Mammary epithelial cell (primary cell): ENCODE measurements at regions of chr17 and their contacts with region 1.

Region 1: GRCh38 chr17:57783106-57783742 is 38.1 kb upstream of the CCDC182 start:
- DNase-seq: peak; percentile 13
- H3K4me3 ChIP-seq: peak overlapping the region in 1 of 3 experiments; percentile 17
- H3K27ac ChIP-seq: no peak overlapping the region
- H3K4me1 ChIP-seq: peaks cover 4% of the 10 kb centered on the region
- H3K27me3 ChIP-seq: no peaks in the 10 kb centered on the region
- CTCF ChIP-seq: peak; percentile 71 to 81

Region 2: DNA sequence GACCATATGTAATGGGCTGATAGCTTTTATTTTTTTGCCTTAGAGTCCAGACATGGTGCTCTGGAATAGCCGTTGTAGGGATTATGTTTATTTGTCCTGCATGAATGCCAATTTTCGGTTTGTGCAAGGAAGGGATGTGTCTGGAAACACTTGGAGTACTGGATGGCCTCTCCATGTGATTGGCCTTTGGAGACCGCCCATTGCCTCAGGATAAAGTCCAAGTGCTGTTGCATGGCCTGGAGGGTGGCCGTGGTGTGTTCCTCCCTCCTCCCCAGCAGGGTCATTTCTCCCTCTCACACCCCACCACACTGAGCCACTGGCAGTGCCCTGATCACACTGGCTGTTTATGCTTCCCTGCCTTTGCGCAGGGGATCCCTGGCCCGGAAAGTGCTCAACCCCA is 432.9 kb before region 1 on chr17:
- CTCF ChIA-PET with region 1: interaction called, 22 read pairs
- dilution Hi-C with region 1: no loop called
- in situ Hi-C with region 1: no loop called
- intact Hi-C with region 1: no loop called
- DNase-seq: no peak
- H3K4me3 ChIP-seq: no peak overlapping the region
- H3K27ac ChIP-seq: no peak overlapping the region
- H3K4me1 ChIP-seq: no peaks in the 10 kb centered on the region
- H3K27me3 ChIP-seq: no peaks in the 10 kb centered on the region
- CTCF ChIP-seq: no peak

Region 3: DNA sequence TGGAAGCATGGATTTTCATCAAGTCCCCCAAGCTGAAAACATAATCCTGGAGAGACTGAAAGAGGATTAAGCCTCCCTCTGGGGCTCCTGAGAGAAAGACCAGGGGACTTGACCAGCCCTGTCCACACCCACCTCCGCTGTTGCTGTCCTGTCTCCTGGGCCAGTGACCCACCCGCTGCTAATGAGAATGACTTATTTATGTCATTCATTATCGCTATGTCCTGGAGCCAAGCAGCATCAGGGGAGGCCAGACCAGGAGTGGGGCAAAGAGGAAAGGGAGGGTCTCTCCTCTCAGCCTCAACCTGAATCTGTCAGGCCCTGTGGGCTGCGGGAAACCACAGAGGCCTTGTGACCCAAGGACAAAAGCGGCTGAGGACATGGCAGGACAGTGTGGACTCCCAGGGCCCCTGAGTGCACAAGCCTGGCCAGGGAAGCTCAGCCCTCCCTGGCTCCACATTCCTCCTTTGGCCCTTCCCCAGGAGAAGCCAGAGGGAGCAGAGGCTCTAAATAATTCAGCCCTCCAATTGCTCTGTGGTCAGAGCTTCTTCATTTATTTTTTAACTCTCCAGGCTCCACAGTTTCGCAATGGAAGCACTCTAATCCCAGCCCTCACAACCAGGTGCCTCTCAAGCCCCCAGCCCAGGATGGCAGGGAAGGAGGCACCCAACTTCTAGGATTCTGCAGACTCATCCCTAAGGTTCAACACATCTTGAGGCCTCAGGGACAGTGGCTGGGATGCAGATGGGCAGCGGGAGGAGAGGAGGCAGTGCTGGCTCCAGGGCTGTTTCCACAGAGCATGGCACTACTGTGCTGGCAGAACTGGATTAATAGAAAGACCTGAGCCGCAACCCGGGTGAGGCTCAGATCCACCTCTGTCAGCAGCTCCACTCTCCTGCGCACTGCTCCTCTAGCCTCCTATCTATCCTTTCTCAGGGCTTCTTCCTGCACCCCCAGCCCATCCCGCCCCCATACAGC is 152.9 kb after region 1 on chr17:
- CTCF ChIA-PET with region 1: no interaction called
- dilution Hi-C with region 1: no loop called
- in situ Hi-C with region 1: no loop called
- intact Hi-C with region 1: no loop called
- DNase-seq: no peak
- H3K4me3 ChIP-seq: no peak overlapping the region
- H3K27ac ChIP-seq: peak overlapping the region; percentile 39
- H3K4me1 ChIP-seq: peaks cover 18% of the 10 kb centered on the region
- H3K27me3 ChIP-seq: no peaks in the 10 kb centered on the region
- CTCF ChIP-seq: no peak

Region 4: GRCh38 chr17:57955183-57955931 is 172.1 kb after region 1 on chr17 and contains the start of gene CUEDC1:
- CTCF ChIA-PET with region 1: no interaction called
- dilution Hi-C with region 1: no loop called
- in situ Hi-C with region 1: no loop called
- intact Hi-C with region 1: no loop called
- DNase-seq: peak; percentile 34
- H3K4me3 ChIP-seq: peak within 1 kb of the TSS; percentile 51 to 55 (median 52)
- H3K27ac ChIP-seq: no peak within 1 kb of the TSS
- H3K4me1 ChIP-seq: peaks cover 8% of the 10 kb centered on the region
- H3K27me3 ChIP-seq: no peaks in the 10 kb centered on the region
- CTCF ChIP-seq: no peak
- total RNA-seq, gene CUEDC1: 1.8 to 14.4 TPM